Activated CD4-positive, alpha-beta memory T cell treated with anti-CD3 and anti-CD28 coated beads for 36 hours (primary cell): ENCODE measurements at regions of chr4 and their contacts with region 1.

Region 1: DNA sequence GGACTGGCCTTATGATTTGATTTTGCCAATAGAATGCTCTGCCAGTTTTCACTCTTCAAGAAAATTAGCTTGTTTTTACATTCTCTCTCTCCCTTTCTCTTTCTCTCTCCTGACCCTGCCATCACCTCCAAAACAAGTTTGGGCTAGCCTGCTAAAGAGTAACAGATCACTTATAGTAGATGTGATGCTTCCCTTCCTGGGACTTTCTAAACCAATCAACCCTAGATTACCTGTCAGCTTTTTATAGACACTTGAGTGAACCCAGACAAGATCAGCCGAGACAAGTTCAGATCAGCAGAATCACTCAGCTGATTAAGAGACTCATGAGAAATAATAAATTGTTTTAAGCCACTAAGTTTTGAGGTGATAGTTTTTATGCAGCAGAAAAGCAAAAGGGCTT is 521.2 kb downstream of the ANKRD50 start:
- DNase-seq: no peak
- H3K4me3 Mint-ChIP-seq: no peak overlapping the region
- H3K27ac Mint-ChIP-seq: no peak overlapping the region
- H3K4me1 Mint-ChIP-seq: no peaks in the 10 kb centered on the region
- H3K27me3 Mint-ChIP-seq: no peaks in the 10 kb centered on the region

Region 2: GRCh38 chr4:123168812-123169211 is 1022.5 kb before region 1 on chr4:
- CTCF ChIA-PET with region 1: no interaction called
- POLR2A ChIA-PET with region 1: no interaction called
- intact Hi-C with region 1: loop called (anchors 5 kb)
- DNase-seq: no peak
- H3K4me3 Mint-ChIP-seq: no peak overlapping the region
- H3K27ac Mint-ChIP-seq: no peak overlapping the region
- H3K4me1 Mint-ChIP-seq: peaks cover 3% of the 10 kb centered on the region
- H3K27me3 Mint-ChIP-seq: no peaks in the 10 kb centered on the region

Region 3: DNA sequence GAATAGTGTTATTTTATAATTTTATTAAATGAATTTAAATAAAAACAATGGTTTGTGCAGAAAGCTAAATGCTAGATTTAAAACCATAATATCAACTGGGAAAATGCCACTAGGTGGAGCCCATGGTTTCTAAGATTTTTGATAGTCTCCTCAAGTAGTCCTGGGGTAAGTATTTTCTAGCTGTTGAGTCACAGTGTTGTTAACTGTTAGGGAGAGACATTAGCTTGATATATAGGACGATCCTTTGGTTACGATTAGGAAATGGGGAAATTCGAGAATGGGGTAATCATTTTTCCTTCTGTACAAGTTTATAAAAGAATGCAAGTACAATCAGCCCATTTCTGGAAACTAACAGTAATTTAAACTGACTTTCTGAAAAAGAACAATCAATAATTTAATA is 142.8 kb after region 1 on chr4:
- CTCF ChIA-PET with region 1: no interaction called
- POLR2A ChIA-PET with region 1: no interaction called
- intact Hi-C with region 1: no loop called
- DNase-seq: no peak
- H3K4me3 Mint-ChIP-seq: no peak overlapping the region
- H3K27ac Mint-ChIP-seq: no peak overlapping the region
- H3K4me1 Mint-ChIP-seq: no peaks in the 10 kb centered on the region
- H3K27me3 Mint-ChIP-seq: no peaks in the 10 kb centered on the region